ENCODE measurements at regions of chr1 and their contacts with region 1.

Region 1: DNA sequence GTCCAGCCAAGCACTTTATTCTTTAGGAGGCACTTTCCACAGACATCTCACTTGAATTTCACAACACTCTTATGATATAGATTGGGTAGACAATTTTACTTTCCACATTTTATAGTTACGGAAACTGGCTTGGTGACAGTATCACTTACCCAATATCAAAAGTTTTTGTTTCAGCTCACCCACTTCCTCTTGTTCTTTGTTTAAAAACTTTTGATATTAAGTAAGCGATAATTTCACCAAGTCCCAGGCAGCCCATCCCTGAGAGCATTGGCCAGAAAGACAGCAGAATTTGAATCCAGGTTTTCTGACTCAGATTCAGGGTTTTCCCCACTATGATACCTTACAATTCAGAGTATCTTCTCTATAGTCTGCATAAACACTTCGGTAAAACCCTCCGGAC is 60.0 kb downstream of the LRIG2 start:
- DNase-seq: peak; percentile 56
- ATAC-seq: peak; percentile 84
- H3K4me3 Mint-ChIP-seq: no peak overlapping the region
- H3K27ac Mint-ChIP-seq: peak overlapping the region; percentile 38
- H3K4me1 Mint-ChIP-seq: peaks cover 60% of the 10 kb centered on the region
- H3K27me3 Mint-ChIP-seq: no peaks in the 10 kb centered on the region

Region 2: GRCh38 chr1:112911506-112911905 is 221.5 kb before region 1 on chr1:
- CTCF ChIA-PET with region 1: no interaction called
- POLR2A ChIA-PET with region 1: no interaction called
- intact Hi-C with region 1: no loop called
- DNase-seq: no peak
- ATAC-seq: no peak
- H3K4me3 Mint-ChIP-seq: no peak overlapping the region
- H3K27ac Mint-ChIP-seq: no peak overlapping the region
- H3K4me1 Mint-ChIP-seq: peaks cover 2% of the 10 kb centered on the region
- H3K27me3 Mint-ChIP-seq: no peaks in the 10 kb centered on the region

Region 3: GRCh38 chr1:113804421-113805255 is 671.6 kb after region 1 on chr1:
- CTCF ChIA-PET with region 1: no interaction called
- POLR2A ChIA-PET with region 1: no interaction called
- intact Hi-C with region 1: loop called in 1 of 2 experiments (anchors 5 kb)
- DNase-seq: no peak
- ATAC-seq: peak; percentile 40
- H3K4me3 Mint-ChIP-seq: no peak overlapping the region
- H3K27ac Mint-ChIP-seq: no peak overlapping the region
- H3K4me1 Mint-ChIP-seq: peaks cover 80% of the 10 kb centered on the region
- H3K27me3 Mint-ChIP-seq: no peaks in the 10 kb centered on the region

Region 4: DNA sequence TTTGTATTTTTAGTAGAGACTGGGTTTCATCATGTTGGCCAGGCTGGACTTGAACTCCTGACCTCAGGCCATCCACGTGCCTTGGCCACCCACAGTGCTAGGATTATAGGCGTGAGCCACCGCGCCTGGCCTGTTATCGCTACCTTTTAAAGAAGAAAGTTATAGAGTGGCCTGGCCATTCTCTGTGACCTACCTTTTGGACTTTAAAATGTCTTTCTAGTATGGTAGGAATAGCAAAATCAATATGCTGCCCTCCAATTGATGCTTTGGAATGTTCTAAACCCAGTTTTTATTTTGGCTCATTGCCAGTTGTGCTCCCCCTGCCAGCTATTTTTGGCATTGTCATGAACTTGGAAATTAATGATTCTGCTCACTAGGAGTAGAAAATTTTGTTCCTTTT is 816.0 kb after region 1 on chr1:
- CTCF ChIA-PET with region 1: no interaction called
- POLR2A ChIA-PET with region 1: no interaction called
- intact Hi-C with region 1: loop called in 1 of 2 experiments (anchors 10 kb)
- DNase-seq: no peak
- ATAC-seq: no peak
- H3K4me3 Mint-ChIP-seq: no peak overlapping the region
- H3K27ac Mint-ChIP-seq: peak overlapping the region; percentile 79
- H3K4me1 Mint-ChIP-seq: peaks cover 76% of the 10 kb centered on the region
- H3K27me3 Mint-ChIP-seq: no peaks in the 10 kb centered on the region

Measured in activated CD4-positive, alpha-beta T cell treated with anti-CD3 and anti-CD28 coated beads for 36 hours (primary cell).